Endothelial cell of umbilical vein (primary cell): ENCODE measurements at regions of chr7 and their contacts with region 1.

Region 1: DNA sequence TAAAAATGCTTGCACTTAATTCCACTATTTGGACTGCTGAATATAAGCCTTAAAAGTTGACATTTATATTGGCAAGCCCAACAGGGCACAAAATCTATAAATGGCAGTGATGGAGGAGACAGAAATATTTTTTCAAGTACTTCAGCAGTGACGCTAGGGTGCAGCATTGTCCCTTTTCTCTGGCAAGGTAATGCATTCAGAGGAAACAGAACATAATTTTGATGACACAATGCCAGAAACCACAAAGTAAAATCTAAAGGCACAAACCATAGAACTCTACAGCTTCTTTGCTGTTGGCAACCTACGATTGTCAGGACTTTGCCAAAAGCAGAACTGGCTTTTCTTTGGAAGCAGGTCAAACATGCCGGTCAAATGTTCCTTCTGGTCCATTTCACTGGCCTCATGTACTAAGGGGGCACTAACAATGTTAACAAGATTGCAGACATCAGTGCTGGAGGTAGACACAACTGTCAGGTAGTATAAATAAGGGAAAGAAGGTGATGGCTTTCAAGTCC is 30.9 kb upstream of the FAM133B start:
- DNase-seq: peak; percentile 90
- H3K4me3 ChIP-seq: no peak overlapping the region
- H3K27ac ChIP-seq: peak overlapping the region; percentile 75
- H3K4me1 ChIP-seq: peaks cover 23% of the 10 kb centered on the region
- H3K27me3 ChIP-seq: no peaks in the 10 kb centered on the region
- CTCF ChIP-seq: peak; percentile 53 to 64
- POLR2A ChIP-seq: no peak

Region 2: GRCh38 chr7:92576296-92576695 is 44.8 kb before region 1 on chr7:
- CTCF ChIA-PET with region 1: no interaction called
- POLR2A ChIA-PET with region 1: no interaction called
- dilution Hi-C with region 1: no loop called
- intact Hi-C with region 1: no loop called
- DNase-seq: no peak
- H3K4me3 ChIP-seq: no peak overlapping the region
- H3K27ac ChIP-seq: no peak overlapping the region
- H3K4me1 ChIP-seq: no peaks in the 10 kb centered on the region
- H3K27me3 ChIP-seq: no peaks in the 10 kb centered on the region
- CTCF ChIP-seq: no peak
- POLR2A ChIP-seq: no peak

Region 3: GRCh38 chr7:92633211-92633906 is 12.3 kb after region 1 on chr7:
- CTCF ChIA-PET with region 1: interaction called, 8 read pairs
- POLR2A ChIA-PET with region 1: no interaction called
- dilution Hi-C with region 1: no loop called
- intact Hi-C with region 1: loop called (anchors 1 kb)
- DNase-seq: peak; percentile 98
- H3K4me3 ChIP-seq: peak overlapping the region in 1 of 3 experiments; percentile 31
- H3K27ac ChIP-seq: peak overlapping the region; percentile 99
- H3K4me1 ChIP-seq: peaks cover 57% of the 10 kb centered on the region
- H3K27me3 ChIP-seq: no peaks in the 10 kb centered on the region
- CTCF ChIP-seq: no peak
- POLR2A ChIP-seq: peak; percentile 27

Region 4: DNA sequence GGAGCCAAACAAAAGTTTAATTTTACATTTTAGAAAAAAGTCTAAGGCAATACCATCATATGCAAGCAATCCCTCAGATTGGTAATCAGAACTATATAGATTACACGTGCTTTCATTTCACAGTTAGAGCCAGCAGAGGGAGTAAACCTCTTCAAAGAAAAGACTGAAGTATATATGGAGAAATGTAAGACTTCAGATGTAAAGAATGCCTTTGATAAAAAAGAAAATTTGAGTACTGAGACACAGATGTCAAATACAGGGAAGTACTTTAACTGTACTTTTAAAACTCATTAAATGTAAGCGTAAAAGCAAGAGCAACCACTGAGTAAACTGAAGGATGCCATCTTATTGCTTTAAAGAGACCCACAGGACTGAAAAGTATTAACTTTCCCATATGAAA is 70.5 kb after region 1 on chr7:
- CTCF ChIA-PET with region 1: interaction called, 7 read pairs
- POLR2A ChIA-PET with region 1: no interaction called
- dilution Hi-C with region 1: no loop called
- intact Hi-C with region 1: loop called (anchors 1 kb)
- DNase-seq: peak; percentile 77
- H3K4me3 ChIP-seq: no peak overlapping the region
- H3K27ac ChIP-seq: peak overlapping the region; percentile 19
- H3K4me1 ChIP-seq: peaks cover 18% of the 10 kb centered on the region
- H3K27me3 ChIP-seq: no peaks in the 10 kb centered on the region
- CTCF ChIP-seq: peak; percentile 32 to 34
- POLR2A ChIP-seq: no peak

Region 5: GRCh38 chr7:92717993-92718716 is 97.1 kb after region 1 on chr7:
- CTCF ChIA-PET with region 1: interaction called, 3 read pairs
- POLR2A ChIA-PET with region 1: no interaction called
- dilution Hi-C with region 1: no loop called
- intact Hi-C with region 1: loop called (anchors 1 kb)
- DNase-seq: peak; percentile 97
- H3K4me3 ChIP-seq: peak overlapping the region; percentile 28 to 72 (median 36)
- H3K27ac ChIP-seq: peak overlapping the region; percentile 95
- H3K4me1 ChIP-seq: peaks cover 28% of the 10 kb centered on the region
- H3K27me3 ChIP-seq: no peaks in the 10 kb centered on the region
- CTCF ChIP-seq: no peak
- POLR2A ChIP-seq: peak; percentile 59

Region 6: DNA sequence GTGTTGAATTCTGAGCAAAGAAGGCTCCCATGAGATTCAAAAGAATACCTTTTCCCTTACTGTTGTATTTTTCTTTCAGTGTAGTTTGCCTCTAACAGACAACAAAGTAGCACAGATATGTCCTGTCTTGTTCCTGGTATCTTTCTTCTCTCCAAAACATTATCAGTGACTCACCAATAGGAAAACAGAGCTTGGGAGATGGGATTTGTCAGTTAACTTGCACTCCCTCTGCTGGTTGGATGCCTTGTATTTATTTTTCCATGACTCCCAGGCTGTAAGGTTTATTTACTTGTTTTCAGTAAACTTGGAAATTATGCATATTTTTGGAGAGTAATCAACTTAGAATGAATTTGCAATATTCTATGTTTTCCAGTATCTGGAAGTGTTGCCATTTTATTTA is 367.0 kb after region 1 on chr7:
- CTCF ChIA-PET with region 1: interaction called, 6 read pairs
- POLR2A ChIA-PET with region 1: no interaction called
- dilution Hi-C with region 1: no loop called
- intact Hi-C with region 1: loop called (anchors 1 kb)
- DNase-seq: peak; percentile 57
- H3K4me3 ChIP-seq: no peak overlapping the region
- H3K27ac ChIP-seq: no peak overlapping the region
- H3K4me1 ChIP-seq: no peaks in the 10 kb centered on the region
- H3K27me3 ChIP-seq: no peaks in the 10 kb centered on the region
- CTCF ChIP-seq: peak; percentile 26 to 33
- POLR2A ChIP-seq: no peak